Psoas muscle (tissue), 8 donors: ENCODE measurements at regions of chr4 and their contacts with region 1.

Region 1: GRCh38 chr4:48588230-48589097 is 98.4 kb downstream of the ZAR1 start:
- DNase-seq: no peak
- ATAC-seq: no peak
- H3K4me3 ChIP-seq: no peak overlapping the region
- H3K27ac ChIP-seq: no peak overlapping the region
- H3K4me1 ChIP-seq: peaks cover 6% of the 10 kb centered on the region
- H3K27me3 ChIP-seq: no peaks in the 10 kb centered on the region
- CTCF ChIP-seq: no peak

Region 2: DNA sequence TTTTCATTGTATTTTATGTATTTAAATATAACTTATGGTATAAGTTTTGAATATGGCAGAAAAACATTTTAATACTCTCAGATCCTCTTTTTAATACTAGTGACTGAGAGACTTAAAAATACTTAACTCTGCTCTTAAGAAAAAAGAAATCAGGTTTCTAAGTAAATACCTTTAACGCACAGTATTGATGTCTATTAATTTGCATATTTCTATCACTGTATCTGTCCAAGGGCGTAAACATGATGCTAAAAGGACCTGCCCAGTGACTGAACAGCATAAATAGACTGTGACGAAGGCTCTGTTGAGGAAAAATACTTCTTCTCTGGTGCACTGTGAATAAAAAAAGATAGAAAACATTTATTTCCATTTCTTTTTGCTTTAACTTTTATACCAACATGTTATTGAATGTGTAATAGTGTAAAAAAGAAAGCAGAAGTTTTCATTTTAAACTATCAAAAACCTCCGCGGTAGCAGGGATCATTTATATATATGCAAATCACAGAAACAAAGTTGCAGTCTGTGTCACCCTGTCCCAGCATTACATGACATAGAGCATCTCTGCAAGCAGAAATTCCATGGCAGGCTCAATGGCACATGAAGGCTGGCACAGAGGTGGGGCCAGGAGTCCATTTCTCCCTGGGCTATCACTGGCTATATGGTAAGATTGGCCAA is 23.0 kb before region 1 on chr4:
- intact Hi-C with region 1: no loop called
- DNase-seq: no peak
- ATAC-seq: no peak
- H3K4me3 ChIP-seq: no peak overlapping the region
- H3K27ac ChIP-seq: no peak overlapping the region
- H3K4me1 ChIP-seq: no peaks in the 10 kb centered on the region
- H3K27me3 ChIP-seq: no peaks in the 10 kb centered on the region
- CTCF ChIP-seq: no peak

Region 3: DNA sequence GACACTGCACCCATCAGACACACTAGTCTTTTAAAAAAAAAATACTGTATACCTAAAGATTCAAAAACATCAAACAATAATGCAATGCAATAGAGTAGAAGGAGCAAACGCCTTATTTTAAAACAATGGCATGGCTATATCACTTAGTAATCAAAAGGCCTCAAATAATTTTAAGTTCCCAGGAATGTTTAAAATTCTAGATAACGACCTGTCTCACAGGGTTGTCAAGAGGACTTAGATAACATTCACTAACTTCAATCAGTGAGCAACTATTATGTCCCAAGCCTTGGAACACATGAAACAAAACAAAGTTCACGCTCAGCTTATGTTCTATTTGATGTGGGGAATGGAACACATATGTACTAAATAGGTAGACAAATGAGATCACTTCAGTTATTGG is 85.1 kb after region 1 on chr4:
- intact Hi-C with region 1: loop called in 1 of 2 experiments (anchors 10 kb)
- DNase-seq: no peak
- ATAC-seq: no peak
- H3K4me3 ChIP-seq: no peak overlapping the region
- H3K27ac ChIP-seq: no peak overlapping the region
- H3K4me1 ChIP-seq: peaks cover 8% of the 10 kb centered on the region
- H3K27me3 ChIP-seq: no peaks in the 10 kb centered on the region
- CTCF ChIP-seq: no peak

Region 4: DNA sequence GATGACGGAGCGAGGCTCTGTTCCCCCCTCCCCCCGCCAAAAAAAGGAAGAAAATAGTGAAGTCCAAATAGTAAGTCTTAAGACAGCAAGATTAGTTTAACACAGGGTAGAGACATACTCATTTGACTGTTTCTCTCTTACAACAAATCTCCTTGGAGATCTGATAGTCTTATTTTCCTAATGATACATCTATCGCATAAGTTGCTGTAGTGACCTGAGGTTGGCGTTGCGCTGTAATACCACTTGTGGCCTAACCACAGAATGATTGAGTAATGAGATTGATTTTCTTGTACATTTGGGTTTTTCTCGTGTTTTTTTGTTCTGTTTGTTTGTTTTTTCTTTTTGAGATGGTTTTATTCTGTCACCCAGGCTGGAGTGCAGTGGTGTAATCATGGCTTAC is 269.7 kb after region 1 on chr4:
- intact Hi-C with region 1: loop called in 1 of 2 experiments (anchors 10 kb)
- DNase-seq: no peak
- ATAC-seq: no peak
- H3K4me3 ChIP-seq: no peak overlapping the region
- H3K27ac ChIP-seq: no peak overlapping the region
- H3K4me1 ChIP-seq: no peaks in the 10 kb centered on the region
- H3K27me3 ChIP-seq: no peaks in the 10 kb centered on the region
- CTCF ChIP-seq: no peak